GM10248 (cell line): ENCODE measurements at regions of chr14 and their contacts with region 1.

Region 1: GRCh38 chr14:69879175-69880043 is at the start of gene SMOC1:
- DNase-seq: peak; percentile 63
- CTCF ChIP-seq: no peak

Region 2: GRCh38 chr14:69896080-69896479 is 16.7 kb after region 1 on chr14:
- CTCF ChIA-PET with region 1: interaction called, 17 read pairs
- POLR2A ChIA-PET with region 1: no interaction called
- DNase-seq: no peak
- CTCF ChIP-seq: no peak